PC-3 (cell line): ENCODE measurements at regions of chr1 and their contacts with region 1.

Region 1: DNA sequence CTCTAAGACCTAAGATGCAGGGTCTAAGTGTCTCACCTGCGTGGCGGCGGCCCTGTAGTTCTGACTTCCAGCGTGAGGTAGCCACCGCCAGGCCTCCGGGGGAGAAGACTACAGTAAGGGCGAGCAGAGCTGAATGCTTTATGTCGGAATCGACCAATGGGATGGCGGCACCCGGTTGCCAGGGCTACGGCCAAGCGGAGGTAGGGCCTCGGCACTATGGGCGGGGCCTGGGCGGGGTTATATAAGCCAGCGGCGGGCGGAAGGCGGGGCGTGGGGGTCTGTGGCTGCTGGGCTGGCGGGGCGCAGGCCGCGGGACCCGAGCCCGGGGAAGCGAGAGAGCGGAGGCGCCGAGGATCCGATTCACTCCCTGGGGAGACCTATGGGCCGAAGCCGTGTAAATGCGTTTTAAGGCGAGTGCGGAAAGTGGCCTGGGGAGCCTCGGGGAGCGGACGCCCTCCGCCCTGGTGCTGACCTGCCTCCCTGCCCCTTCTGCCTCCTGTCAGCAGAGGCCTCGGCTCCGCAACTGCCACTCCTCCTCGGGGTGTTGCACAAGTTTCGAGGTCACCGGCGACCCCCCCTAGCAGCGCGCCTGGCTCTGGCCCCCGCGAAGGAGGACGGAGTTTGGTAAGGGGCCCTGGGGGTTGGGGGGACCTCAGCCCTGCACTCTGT is at the start of gene AZIN2:
- DNase-seq: peak; percentile 96
- ATAC-seq: peak; percentile 99
- H3K4me3 ChIP-seq: peak within 1 kb of the TSS; percentile 89
- H3K27ac ChIP-seq: no peak within 1 kb of the TSS
- H3K4me1 ChIP-seq: peaks cover 12% of the 10 kb centered on the region; the same call in 1 of the 2 replicates
- H3K27me3 ChIP-seq: no peaks in the 10 kb centered on the region
- CTCF ChIP-seq: no peak
- total RNA-seq, gene AZIN2: 2.2 and 3.3 TPM in 2 replicates

Region 2: DNA sequence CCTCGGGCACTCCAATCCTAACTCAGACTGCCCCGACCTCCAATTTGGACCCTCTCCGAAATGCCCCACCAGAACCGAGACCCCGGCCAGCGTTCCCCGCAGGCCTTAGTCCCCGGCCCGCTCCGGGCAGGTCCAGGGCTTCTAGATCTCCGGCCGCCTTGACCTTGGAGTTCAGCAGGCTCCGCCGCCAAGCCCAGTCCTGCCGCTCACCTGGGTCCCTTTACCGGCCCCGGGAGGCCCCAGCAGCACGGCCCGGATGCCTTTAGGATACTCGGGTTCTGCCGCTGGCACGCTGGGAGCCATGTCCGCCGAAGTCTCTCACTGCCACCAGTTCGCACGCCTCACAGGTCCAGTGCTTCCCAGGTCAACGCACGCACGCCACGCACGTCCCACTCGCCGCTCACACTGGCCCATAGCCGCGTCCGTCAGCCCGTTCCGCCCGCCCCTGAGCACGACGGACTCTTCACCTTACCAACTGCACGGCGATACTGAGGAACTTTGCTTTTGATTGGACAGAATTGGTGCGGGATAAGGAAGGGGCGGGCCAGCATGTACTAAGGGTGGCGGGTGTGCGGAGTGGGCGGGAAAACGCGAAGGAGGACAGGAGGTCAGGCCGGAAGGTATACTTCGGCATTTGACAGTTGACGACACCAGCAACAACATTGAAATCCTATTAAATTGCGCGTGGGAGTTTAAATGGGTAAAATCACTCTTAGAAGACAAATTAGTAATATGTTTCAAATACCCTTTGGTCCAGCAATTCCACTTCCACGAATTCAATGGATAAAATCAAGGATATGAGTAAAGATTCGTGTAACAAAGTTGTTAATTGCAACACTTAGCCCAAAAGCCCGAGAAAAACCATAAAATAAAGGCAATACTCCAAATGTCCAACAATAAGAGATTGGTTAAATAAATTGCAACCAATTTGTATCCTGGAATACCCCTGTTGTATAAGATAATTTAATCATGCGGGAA is 44.2 kb before region 1 on chr1 and contains the start of gene AK2:
- CTCF ChIA-PET with region 1: no interaction called
- POLR2A ChIA-PET with region 1: no interaction called
- intact Hi-C with region 1: loop called (anchors 1 kb)
- DNase-seq: peak; percentile 98
- ATAC-seq: peak; percentile 99
- H3K4me3 ChIP-seq: peak within 1 kb of the TSS; percentile 91
- H3K27ac ChIP-seq: peak within 1 kb of the TSS; percentile 66
- H3K4me1 ChIP-seq: peaks cover 23% of the 10 kb centered on the region
- H3K27me3 ChIP-seq: no peaks in the 10 kb centered on the region
- CTCF ChIP-seq: no peak
- total RNA-seq, gene AK2: 213 and 236 TPM in 2 replicates